K562 (cell line): ENCODE measurements at regions of chr6 and their contacts with region 1.

Region 1: GRCh38 chr6:16168858-16169257 is 40.0 kb downstream of the MYLIP start:
- DNase-seq: peak in 2 of 4 experiments; percentile 38 to 82
- ATAC-seq: peak; percentile 92
- H3K4me3 ChIP-seq: no peak overlapping the region
- H3K27ac ChIP-seq: no peak overlapping the region
- H3K4me1 ChIP-seq: peaks cover 0 to 17% of the 10 kb centered on the region in 2 experiments; a peak in 4 of 5 replicates
- H3K27me3 ChIP-seq: no peaks in the 10 kb centered on the region
- CTCF ChIP-seq: peak; percentile 76 to 86 (median 78)
- EP300 ChIP-seq: peak; percentile 69
- POLR2A ChIP-seq: no peak
- RAD21 ChIP-seq: peak; percentile 82 to 94

Region 2: DNA sequence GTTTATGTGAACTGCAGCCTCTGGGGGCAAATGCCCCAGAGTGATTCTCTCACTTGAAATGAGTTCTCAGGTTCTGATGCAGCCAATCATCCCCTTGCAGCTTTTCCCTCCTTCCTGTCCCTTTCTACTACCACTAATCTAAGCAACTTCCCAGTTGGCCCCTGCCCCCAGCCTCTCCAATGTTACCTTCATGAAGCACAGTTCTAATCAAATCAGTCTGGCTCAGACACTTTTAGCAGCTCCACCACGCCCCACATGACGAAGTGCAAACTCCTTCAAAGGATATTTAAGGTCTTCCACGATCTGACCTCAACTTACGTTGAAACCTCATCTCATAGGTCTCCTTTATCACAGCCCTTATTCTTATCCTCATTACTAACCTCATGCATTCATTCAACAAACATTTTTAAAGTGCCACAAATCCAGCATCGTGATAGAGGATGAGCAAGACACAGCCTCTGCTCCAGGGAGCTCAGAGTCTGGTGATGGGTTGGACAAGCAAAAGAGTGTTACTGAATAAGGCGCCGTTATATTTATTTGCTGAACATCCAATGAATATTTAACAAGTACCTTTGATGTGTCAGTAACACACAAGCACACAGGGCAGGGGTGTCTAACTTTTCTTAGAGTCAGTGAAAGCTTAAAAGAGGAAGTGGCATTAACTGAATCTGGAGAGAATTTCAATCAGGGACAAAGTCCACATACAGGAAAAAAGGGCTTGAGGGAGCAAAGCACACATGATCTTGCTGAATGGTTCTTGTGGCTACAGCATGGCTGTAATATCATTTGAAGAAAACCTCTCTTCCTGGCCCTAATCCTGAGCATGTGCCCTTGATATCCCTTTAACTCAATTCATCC is 485.7 kb before region 1 on chr6:
- CTCF ChIA-PET with region 1: no interaction called
- POLR2A ChIA-PET with region 1: no interaction called
- in situ Hi-C with region 1: loop called (anchors 10 kb)
- intact Hi-C with region 1: no loop called
- DNase-seq: peak in 1 of 4 experiments; percentile 64
- ATAC-seq: peak; percentile 82
- H3K4me3 ChIP-seq: no peak overlapping the region
- H3K27ac ChIP-seq: no peak overlapping the region
- H3K4me1 ChIP-seq: peaks cover 0 to 7% of the 10 kb centered on the region in 2 experiments; a peak in 3 of 5 replicates
- H3K27me3 ChIP-seq: no peaks in the 10 kb centered on the region
- CTCF ChIP-seq: no peak
- EP300 ChIP-seq: peak; percentile 6; the same call in 1 of the 2 replicates
- POLR2A ChIP-seq: no peak
- RAD21 ChIP-seq: no peak

Region 3: DNA sequence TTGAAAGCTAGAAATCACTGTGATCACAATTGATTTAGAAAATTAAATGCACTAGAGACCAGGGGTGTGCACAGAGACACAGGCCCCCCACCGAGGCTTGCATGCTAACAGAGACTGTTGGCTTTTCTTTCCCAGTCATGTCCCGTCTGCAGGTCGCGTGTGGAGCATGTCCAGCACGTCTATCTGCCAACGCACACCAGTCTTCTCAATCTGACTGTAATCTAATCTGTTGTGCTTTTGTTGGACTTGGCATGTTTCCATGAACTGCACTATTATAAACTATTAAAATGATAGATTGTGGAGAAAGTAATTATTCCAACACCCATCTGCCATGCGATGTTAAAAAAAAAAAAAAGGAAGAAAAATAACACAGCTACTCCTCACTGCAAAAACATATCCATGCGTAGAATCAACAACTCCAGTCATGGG is 22.3 kb before region 1 on chr6:
- CTCF ChIA-PET with region 1: no interaction called
- POLR2A ChIA-PET with region 1: interaction called, 14 read pairs
- in situ Hi-C with region 1: no loop called
- intact Hi-C with region 1: no loop called
- DNase-seq: no peak
- ATAC-seq: no peak
- H3K4me3 ChIP-seq: no peak overlapping the region
- H3K27ac ChIP-seq: no peak overlapping the region
- H3K4me1 ChIP-seq: peaks cover 0 to 3% of the 10 kb centered on the region in 2 experiments; a peak in 1 of 5 replicates
- H3K27me3 ChIP-seq: no peaks in the 10 kb centered on the region
- CTCF ChIP-seq: no peak
- EP300 ChIP-seq: no peak
- POLR2A ChIP-seq: no peak
- RAD21 ChIP-seq: no peak

Region 4: GRCh38 chr6:16345437-16346330 is 176.8 kb after region 1 on chr6:
- CTCF ChIA-PET with region 1: no interaction called
- POLR2A ChIA-PET with region 1: no interaction called
- in situ Hi-C with region 1: no loop called
- intact Hi-C with region 1: no loop called
- DNase-seq: peak in 3 of 4 experiments; percentile 33 to 69 (median 55)
- ATAC-seq: peak; percentile 72
- H3K4me3 ChIP-seq: no peak overlapping the region
- H3K27ac ChIP-seq: peak overlapping the region; percentile 71; the same call in 2 of the 3 replicates
- H3K4me1 ChIP-seq: peaks cover 12 to 32% of the 10 kb centered on the region in 2 experiments
- H3K27me3 ChIP-seq: no peaks in the 10 kb centered on the region
- CTCF ChIP-seq: no peak
- EP300 ChIP-seq: peak; percentile 59; the same call in 1 of the 2 replicates
- POLR2A ChIP-seq: no peak
- RAD21 ChIP-seq: no peak; a peak in 1 of 4 replicates

Region 5: DNA sequence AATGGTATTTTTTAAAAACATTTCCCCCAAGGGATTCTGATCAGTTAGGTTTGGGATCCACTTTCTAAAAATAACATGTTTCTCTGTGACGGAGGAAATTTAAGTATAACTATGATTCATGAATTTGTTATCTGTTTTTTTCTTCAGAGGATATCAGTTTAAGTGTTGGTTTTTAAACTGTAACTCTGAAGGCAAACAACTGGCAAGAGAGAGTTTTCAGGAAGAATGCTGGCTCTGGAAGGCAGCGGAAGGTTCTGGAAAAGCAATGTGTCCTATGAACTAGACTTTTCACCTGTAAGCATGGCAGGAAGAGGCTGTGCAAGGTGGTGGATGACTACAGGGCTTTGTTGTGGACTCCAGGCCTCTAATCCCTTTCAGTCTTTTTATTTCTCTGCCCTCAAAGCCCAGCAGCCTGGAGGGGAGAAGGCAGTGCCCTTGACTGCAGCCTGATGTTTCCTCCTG is 222.6 kb after region 1 on chr6:
- CTCF ChIA-PET with region 1: no interaction called
- POLR2A ChIA-PET with region 1: no interaction called
- in situ Hi-C with region 1: no loop called
- intact Hi-C with region 1: no loop called
- DNase-seq: no peak
- ATAC-seq: no peak; the same call in 2 of the 3 replicates
- H3K4me3 ChIP-seq: no peak overlapping the region
- H3K27ac ChIP-seq: no peak overlapping the region
- H3K4me1 ChIP-seq: peaks cover 0 to 5% of the 10 kb centered on the region in 2 experiments; a peak in 2 of 5 replicates
- H3K27me3 ChIP-seq: peaks cover 20 to 22% of the 10 kb centered on the region in 2 experiments; a peak in 4 of 5 replicates
- CTCF ChIP-seq: no peak
- EP300 ChIP-seq: no peak
- POLR2A ChIP-seq: no peak
- RAD21 ChIP-seq: no peak